Naive thymus-derived CD4-positive, alpha-beta T cell (primary cell): ENCODE measurements at regions of chr7 and their contacts with region 1.

Region 1: DNA sequence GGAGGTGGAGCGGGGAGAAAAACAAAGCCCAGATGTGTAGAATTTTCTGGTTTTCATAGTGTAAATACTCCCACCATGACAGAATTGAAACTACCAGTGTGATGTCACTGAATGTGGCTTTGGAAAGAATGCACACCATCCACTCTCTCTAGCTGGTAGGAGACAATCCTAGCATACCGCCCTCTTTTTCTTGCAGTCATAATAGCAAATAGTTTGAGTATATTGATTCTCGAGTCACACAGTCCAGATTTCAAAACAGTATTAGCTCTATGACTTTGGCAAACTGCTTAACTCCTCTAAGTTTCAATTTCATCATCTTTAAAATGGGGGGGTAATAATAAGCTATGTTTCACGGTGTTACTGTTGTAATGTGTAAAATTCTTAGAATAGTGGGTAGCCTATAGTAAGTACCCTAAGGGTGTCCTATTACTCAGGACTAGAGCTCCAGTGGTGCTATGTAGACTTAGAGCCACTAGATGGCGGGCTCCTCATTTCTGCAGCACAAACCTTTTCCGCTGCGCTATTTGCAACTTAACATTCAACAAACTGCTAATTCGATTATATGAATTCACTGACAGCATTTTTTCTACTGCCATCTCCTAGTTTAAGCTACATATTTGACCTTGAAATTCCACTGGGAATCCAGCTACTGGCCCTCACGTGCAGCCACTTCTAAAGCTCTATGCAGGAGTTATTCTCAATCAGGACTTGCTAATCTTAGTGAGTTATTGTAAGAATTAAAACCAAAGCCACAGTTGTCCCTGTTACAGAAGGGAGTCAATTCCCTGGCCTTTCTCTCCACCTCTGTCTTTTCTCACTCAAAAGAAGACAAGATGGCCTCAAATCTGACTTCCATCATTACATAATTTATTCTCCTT is 18.7 kb downstream of the TAS2R40 start:
- DNase-seq: peak in 8 of 9 donors; percentile 54 to 82 (median 74)
- ATAC-seq: peak; percentile 95
- H3K4me3 ChIP-seq: no peak overlapping the region
- H3K4me3 Mint-ChIP-seq: peak overlapping the region in 5 of 10 donors; percentile 6 to 48 (median 30)
- H3K27ac ChIP-seq: no peak overlapping the region
- H3K27ac Mint-ChIP-seq: peak overlapping the region in 8 of 9 donors; percentile 1 to 71 (median 34)
- H3K4me1 ChIP-seq: peaks cover 14 to 17% of the 10 kb centered on the region in 2 donors
- H3K4me1 Mint-ChIP-seq: peaks cover 17 to 56% (median 32%) of the 10 kb centered on the region in 7 donors
- H3K27me3 ChIP-seq: no peaks in the 10 kb centered on the region
- H3K27me3 Mint-ChIP-seq: peaks cover under 1 to 21% (median 15%) of the 10 kb centered on the region in 5 donors

Region 2: DNA sequence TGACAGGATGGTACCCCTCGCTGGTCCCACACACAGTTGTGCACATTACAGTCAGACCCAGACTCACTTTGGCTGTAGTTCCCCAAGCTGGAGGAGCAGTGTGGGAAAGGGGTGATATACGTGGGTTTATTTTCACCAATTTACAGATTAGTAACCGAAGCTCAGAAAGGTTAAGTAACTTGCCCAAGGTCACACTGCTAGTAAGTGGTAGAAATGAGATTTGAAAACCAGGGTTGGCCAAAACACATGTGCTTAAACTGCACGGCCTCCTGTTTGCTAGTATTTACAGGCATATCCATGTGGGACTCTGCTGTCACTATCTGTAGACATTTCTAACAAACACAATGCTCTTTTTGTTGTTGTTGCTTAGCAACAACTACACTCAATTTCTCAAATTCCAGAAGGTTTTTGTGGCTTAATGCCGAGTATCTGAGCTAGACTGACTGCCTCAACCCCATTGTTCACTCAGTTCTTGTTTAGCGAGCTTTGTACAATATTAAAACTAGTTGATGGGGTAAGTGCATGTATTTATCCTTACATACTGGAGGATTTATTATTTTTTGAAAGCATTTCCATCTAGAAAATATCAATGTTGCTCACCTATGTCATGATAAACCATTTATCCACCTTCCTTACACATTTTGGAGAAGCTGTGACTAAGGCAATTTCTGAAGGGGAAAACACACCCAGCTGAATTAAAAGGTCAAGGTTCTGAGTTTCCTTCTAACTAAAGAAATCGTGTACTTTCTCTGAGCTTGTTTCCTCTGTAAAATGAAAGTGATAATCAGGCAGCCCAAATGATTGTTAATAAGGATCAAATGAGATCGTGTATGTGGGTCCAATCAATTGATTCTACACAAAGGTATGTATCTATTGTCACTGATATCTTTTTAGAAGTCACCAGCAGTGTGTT is 38.9 kb after region 1 on chr7:
- CTCF ChIA-PET with region 1: interaction called, 12 read pairs
- POLR2A ChIA-PET with region 1: interaction called, 5 read pairs
- intact Hi-C with region 1: no loop called
- DNase-seq: peak in 6 of 9 donors; percentile 32 to 57 (median 40)
- ATAC-seq: peak; percentile 83
- H3K4me3 ChIP-seq: peak overlapping the region; percentile 42
- H3K4me3 Mint-ChIP-seq: peak overlapping the region; percentile 29 to 85 (median 75)
- H3K27ac ChIP-seq: peak overlapping the region; percentile 59
- H3K27ac Mint-ChIP-seq: peak overlapping the region; percentile 46 to 94 (median 85)
- H3K4me1 ChIP-seq: peaks cover 5 to 31% of the 10 kb centered on the region in 2 donors
- H3K4me1 Mint-ChIP-seq: peaks cover 19 to 42% (median 38%) of the 10 kb centered on the region in 7 donors
- H3K27me3 ChIP-seq: no peaks in the 10 kb centered on the region
- H3K27me3 Mint-ChIP-seq: no peaks in the 10 kb centered on the region

Region 3: GRCh38 chr7:143299840-143300239 is 59.3 kb after region 1 on chr7:
- CTCF ChIA-PET with region 1: interaction called, 177 read pairs
- POLR2A ChIA-PET with region 1: interaction called, 16 read pairs
- intact Hi-C with region 1: loop called (anchors 1 kb)
- DNase-seq: peak; percentile 39 to 73 (median 59)
- ATAC-seq: peak; percentile 93
- H3K4me3 ChIP-seq: no peak overlapping the region
- H3K4me3 Mint-ChIP-seq: peak overlapping the region in 3 of 10 donors; percentile 3 to 19 (median 15)
- H3K27ac ChIP-seq: no peak overlapping the region
- H3K27ac Mint-ChIP-seq: peak overlapping the region in 8 of 9 donors; percentile 12 to 84 (median 40)
- H3K4me1 ChIP-seq: peaks cover 7 to 10% of the 10 kb centered on the region in 2 donors
- H3K4me1 Mint-ChIP-seq: peaks cover 31 to 72% (median 44%) of the 10 kb centered on the region in 7 donors
- H3K27me3 ChIP-seq: no peaks in the 10 kb centered on the region
- H3K27me3 Mint-ChIP-seq: no peaks in the 10 kb centered on the region

Region 4: DNA sequence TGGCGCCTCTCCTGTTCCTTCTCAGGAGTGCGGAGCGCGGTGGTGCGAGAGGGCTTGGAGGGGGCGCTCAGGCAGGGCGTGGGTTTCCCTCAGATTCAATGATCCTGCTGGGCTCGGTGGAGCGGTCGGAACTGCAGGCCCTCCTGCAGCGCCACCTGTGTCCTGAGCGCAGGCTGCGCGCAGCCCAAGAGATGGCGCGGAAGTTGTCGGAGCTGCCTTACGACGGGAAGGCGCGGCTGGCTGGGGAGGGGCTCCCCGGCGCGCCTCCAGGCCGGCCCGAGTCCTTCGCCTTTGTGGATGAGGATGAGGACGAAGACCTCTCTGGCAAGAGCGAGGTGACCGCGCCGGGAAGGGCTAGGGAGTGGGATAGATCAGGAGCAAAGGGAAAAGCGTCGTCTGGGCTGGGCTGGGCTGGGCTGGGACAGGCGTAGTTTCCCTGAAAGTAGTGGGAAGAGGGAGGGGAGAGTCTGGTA is 104.9 kb after region 1 on chr7:
- CTCF ChIA-PET with region 1: interaction called, 6 read pairs
- POLR2A ChIA-PET with region 1: no interaction called
- intact Hi-C with region 1: loop called (anchors 1 to 2 kb)
- DNase-seq: peak; percentile 31 to 62 (median 56)
- ATAC-seq: peak; percentile 98
- H3K4me3 ChIP-seq: peak overlapping the region; percentile 29
- H3K4me3 Mint-ChIP-seq: peak overlapping the region; percentile 56 to 87 (median 76)
- H3K27ac ChIP-seq: no peak overlapping the region
- H3K27ac Mint-ChIP-seq: peak overlapping the region in 3 of 9 donors; percentile 3 to 79 (median 56)
- H3K4me1 ChIP-seq: peaks cover 0 to 4% of the 10 kb centered on the region in 2 donors
- H3K4me1 Mint-ChIP-seq: peaks cover 5 to 13% (median 9%) of the 10 kb centered on the region in 7 donors
- H3K27me3 ChIP-seq: no peaks in the 10 kb centered on the region
- H3K27me3 Mint-ChIP-seq: peaks cover 0 to 57% (median 2%) of the 10 kb centered on the region in 5 donors

Region 5: DNA sequence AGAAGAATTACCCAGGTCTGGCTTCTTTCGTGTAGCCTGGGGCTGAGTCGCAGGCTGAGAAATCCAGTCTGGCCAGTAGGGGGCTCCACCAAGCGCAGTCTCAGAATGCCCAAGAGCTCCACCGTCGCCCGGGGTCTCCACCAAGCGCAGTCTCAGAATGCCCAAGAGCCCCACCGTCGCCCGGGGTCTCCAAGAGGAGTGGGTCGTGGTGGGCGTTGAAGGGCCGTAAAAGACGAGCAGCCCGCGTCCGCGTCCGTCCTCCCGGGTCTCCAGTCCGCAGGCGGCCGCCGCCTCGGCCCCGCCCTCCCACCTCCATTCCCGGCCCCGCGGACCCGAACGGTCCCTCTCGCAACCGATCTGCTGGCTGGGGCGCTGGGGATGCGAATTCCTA is 139.7 kb after region 1 on chr7:
- CTCF ChIA-PET with region 1: interaction called, 14 read pairs
- POLR2A ChIA-PET with region 1: interaction called, 8 read pairs
- intact Hi-C with region 1: loop called (anchors 1 to 2 kb)
- DNase-seq: peak; percentile 76 to 90 (median 84)
- ATAC-seq: peak; percentile 73
- H3K4me3 ChIP-seq: peak overlapping the region; percentile 92
- H3K4me3 Mint-ChIP-seq: peak overlapping the region in 9 of 10 donors; percentile 84 to 96 (median 91)
- H3K27ac ChIP-seq: peak overlapping the region; percentile 91
- H3K27ac Mint-ChIP-seq: peak overlapping the region; percentile 90 to 96 (median 93)
- H3K4me1 ChIP-seq: peaks cover 58 to 70% of the 10 kb centered on the region in 2 donors
- H3K4me1 Mint-ChIP-seq: peaks cover 35 to 46% (median 42%) of the 10 kb centered on the region in 7 donors
- H3K27me3 ChIP-seq: no peaks in the 10 kb centered on the region
- H3K27me3 Mint-ChIP-seq: no peaks in the 10 kb centered on the region

Region 6: DNA sequence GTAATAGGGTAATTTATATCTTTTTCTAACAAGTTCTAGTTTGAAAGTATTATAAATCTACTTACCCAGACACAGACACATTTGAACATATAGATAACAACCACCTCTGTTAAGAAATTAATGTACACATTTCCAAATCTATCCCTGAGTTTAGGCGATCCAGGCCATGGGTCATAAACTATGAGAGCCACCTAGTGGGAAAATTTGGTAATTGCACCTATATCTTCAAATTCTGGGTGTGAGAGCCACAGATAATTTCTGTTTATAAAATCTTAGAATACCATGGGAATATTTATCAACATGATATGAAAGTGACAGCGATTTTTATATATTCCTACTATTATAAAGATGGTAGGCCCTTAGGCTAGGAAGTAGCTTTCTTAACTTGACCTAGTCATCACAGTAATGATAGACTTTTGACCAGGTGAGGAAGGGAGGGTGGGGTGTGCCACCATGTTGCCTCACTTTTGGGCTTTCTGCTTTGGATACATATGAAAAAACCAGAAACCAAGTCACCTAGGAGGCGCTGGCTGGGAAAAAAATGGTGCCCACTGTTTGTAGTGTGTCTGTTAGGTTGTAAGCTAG is 176.1 kb after region 1 on chr7:
- CTCF ChIA-PET with region 1: interaction called, 58 read pairs
- POLR2A ChIA-PET with region 1: interaction called, 4 read pairs
- intact Hi-C with region 1: loop called (anchors 1 kb)
- DNase-seq: peak in 6 of 9 donors; percentile 34 to 58 (median 52)
- ATAC-seq: peak; percentile 74
- H3K4me3 ChIP-seq: no peak overlapping the region
- H3K4me3 Mint-ChIP-seq: no peak overlapping the region
- H3K27ac ChIP-seq: no peak overlapping the region
- H3K27ac Mint-ChIP-seq: no peak overlapping the region
- H3K4me1 ChIP-seq: peaks cover 0 to 3% of the 10 kb centered on the region in 2 donors
- H3K4me1 Mint-ChIP-seq: peaks cover 2 to 56% (median 46%) of the 10 kb centered on the region in 7 donors
- H3K27me3 ChIP-seq: no peaks in the 10 kb centered on the region
- H3K27me3 Mint-ChIP-seq: peaks cover 0 to 21% (median 0%) of the 10 kb centered on the region in 5 donors

Region 7: GRCh38 chr7:145065473-145065872 is 1824.9 kb after region 1 on chr7:
- CTCF ChIA-PET with region 1: no interaction called
- POLR2A ChIA-PET with region 1: no interaction called
- intact Hi-C with region 1: no loop called
- DNase-seq: no peak
- ATAC-seq: no peak
- H3K4me3 ChIP-seq: no peak overlapping the region
- H3K4me3 Mint-ChIP-seq: no peak overlapping the region
- H3K27ac ChIP-seq: no peak overlapping the region
- H3K27ac Mint-ChIP-seq: no peak overlapping the region
- H3K4me1 ChIP-seq: no peaks in the 10 kb centered on the region
- H3K4me1 Mint-ChIP-seq: no peaks in the 10 kb centered on the region
- H3K27me3 ChIP-seq: no peaks in the 10 kb centered on the region
- H3K27me3 Mint-ChIP-seq: peaks cover 0 to 9% (median 0%) of the 10 kb centered on the region in 5 donors